ENCODE measurements at regions of chr10 and their contacts with region 1.

Region 1: GRCh38 chr10:100943508-100943907 is 25.8 kb upstream of the SEMA4G start:
- DNase-seq: no peak
- ATAC-seq: peak; percentile 14
- H3K4me3 Mint-ChIP-seq: peak overlapping the region; percentile 59
- H3K27ac Mint-ChIP-seq: peak overlapping the region; percentile 63
- H3K4me1 Mint-ChIP-seq: peaks cover 10% of the 10 kb centered on the region
- H3K27me3 Mint-ChIP-seq: no peaks in the 10 kb centered on the region

Region 2: DNA sequence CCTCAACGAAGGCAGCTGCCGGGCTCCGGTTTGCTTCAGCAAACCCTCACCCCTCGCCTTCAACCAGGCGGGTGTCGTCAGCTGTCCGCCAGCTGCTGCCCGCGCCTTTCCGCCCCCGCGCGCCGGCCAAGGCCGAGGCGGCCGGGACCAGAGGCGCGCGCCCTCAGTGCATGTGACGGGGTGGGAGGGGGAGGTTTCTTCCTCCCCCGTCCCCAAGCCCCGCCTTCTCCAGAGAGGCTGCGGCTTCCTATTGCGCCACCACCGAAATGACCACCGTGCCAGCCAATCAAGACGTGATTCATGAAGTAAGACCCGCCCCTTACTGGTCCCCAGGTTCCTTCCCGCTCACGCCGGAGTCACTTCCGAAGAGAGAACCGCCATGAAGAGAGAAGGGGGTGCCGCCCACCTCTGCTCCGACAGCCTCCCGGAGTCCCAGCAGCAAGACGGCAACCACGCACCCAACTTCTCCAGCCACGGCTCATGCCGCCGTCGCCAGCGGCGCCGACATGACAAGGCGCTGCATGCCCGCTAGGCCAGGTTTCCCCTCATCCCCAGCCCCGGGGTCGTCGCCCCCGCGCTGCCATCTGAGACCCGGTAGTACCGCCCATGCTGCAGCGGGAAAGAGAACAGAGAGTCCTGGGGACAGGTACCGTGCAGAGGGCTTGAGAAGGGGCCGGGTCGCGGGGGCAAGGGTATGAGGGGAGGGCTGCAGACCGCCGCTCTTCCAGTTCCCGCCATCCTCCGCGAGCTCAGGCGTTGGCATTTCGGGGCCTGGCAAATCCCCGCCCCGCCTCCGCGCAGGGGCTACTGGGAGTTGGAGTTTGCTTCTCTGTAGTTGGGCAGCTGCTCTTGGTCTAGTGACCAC is 30.7 kb before region 1 on chr10 and contains the start of gene SLF2:
- POLR2A ChIA-PET with region 1: interaction called, 10 read pairs
- DNase-seq: peak; percentile 89
- ATAC-seq: peak; percentile 94
- H3K4me3 Mint-ChIP-seq: peak within 1 kb of the TSS; percentile 97
- H3K27ac Mint-ChIP-seq: peak within 1 kb of the TSS; percentile 96
- H3K4me1 Mint-ChIP-seq: peaks cover 46% of the 10 kb centered on the region
- H3K27me3 Mint-ChIP-seq: no peaks in the 10 kb centered on the region
- total RNA-seq, gene SLF2: 45.1 to 46.5 TPM

Region 3: GRCh38 chr10:100968062-100968736 is 24.7 kb after region 1 on chr10:
- POLR2A ChIA-PET with region 1: no interaction called
- DNase-seq: no peak
- ATAC-seq: no peak
- H3K4me3 Mint-ChIP-seq: peak overlapping the region; percentile 63
- H3K27ac Mint-ChIP-seq: no peak overlapping the region
- H3K4me1 Mint-ChIP-seq: peaks cover 4% of the 10 kb centered on the region
- H3K27me3 Mint-ChIP-seq: peaks cover 5% of the 10 kb centered on the region

Region 4: DNA sequence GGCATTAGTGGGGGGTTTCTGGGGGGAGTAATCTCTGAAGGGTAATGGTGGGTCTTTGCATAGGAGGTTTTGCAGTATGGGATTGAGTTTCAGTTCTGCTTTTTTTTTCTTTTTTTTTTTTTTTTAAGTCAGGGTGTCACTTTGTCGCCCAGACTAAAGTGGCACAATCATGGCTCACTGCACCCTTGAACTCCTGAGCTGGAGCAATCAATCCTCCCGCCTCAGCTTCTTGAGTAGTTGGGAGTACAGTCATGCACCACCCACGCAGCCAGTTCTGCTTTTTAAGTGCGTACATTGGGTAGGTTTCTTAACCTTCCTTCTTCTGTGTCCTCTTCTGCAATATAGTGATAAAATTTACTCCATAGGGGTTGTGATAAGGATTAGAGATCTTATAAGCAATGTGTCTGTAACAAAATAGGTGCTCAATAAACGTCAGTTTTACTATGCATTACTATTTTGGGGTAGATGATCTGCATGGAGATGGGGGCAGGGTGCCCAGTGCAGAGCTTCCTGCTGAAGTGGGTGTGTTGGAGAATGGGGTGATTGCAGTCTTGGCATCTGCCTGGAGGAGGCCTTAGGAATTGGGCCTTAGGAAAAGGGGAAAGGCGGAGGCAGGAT is 127.9 kb after region 1 on chr10:
- POLR2A ChIA-PET with region 1: no interaction called
- DNase-seq: no peak
- ATAC-seq: no peak
- H3K4me3 Mint-ChIP-seq: no peak overlapping the region
- H3K27ac Mint-ChIP-seq: no peak overlapping the region
- H3K4me1 Mint-ChIP-seq: peaks cover 15% of the 10 kb centered on the region
- H3K27me3 Mint-ChIP-seq: peaks cover 60% of the 10 kb centered on the region